Calu3 (cell line): ENCODE measurements at regions of chr10 and their contacts with region 1.

Region 1: GRCh38 chr10:71383972-71384687 is 12.6 kb upstream of the CDH23 start:
- DNase-seq: peak; percentile 85
- H3K4me3 Mint-ChIP-seq: no peak overlapping the region
- H3K27ac Mint-ChIP-seq: no peak overlapping the region
- H3K4me1 Mint-ChIP-seq: peaks cover 2% of the 10 kb centered on the region
- H3K27me3 Mint-ChIP-seq: peaks cover 40% of the 10 kb centered on the region
- CTCF ChIP-seq: peak; percentile 94

Region 2: GRCh38 chr10:71001470-71001869 is 382.7 kb before region 1 on chr10:
- CTCF ChIA-PET with region 1: no interaction called
- intact Hi-C with region 1: no loop called
- DNase-seq: no peak
- H3K4me3 Mint-ChIP-seq: no peak overlapping the region
- H3K27ac Mint-ChIP-seq: no peak overlapping the region
- H3K4me1 Mint-ChIP-seq: peaks cover 8% of the 10 kb centered on the region
- H3K27me3 Mint-ChIP-seq: peaks cover 100% of the 10 kb centered on the region
- CTCF ChIP-seq: no peak

Region 3: DNA sequence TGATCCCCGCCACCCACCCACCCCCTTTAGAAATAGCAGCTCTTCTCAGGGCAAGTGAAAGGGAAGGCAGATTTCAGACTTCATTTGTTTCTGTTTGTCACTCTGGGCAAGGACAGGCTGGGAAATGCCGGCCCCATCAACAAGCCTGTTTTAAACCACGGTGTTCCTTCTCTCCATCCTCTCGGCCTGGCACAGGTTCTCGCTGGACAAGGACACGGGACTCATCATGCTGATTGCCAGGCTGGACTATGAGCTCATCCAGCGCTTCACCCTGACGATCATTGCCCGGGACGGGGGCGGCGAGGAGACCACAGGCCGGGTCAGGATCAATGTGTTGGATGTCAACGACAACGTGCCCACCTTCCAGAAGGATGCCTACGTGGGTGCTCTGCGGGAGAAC is 293.1 kb after region 1 on chr10:
- CTCF ChIA-PET with region 1: interaction called, 14 read pairs
- intact Hi-C with region 1: no loop called
- DNase-seq: no peak
- H3K4me3 Mint-ChIP-seq: no peak overlapping the region
- H3K27ac Mint-ChIP-seq: no peak overlapping the region
- H3K4me1 Mint-ChIP-seq: no peaks in the 10 kb centered on the region
- H3K27me3 Mint-ChIP-seq: peaks cover 59% of the 10 kb centered on the region
- CTCF ChIP-seq: no peak

Region 4: GRCh38 chr10:71708301-71708703 is 324.2 kb after region 1 on chr10:
- CTCF ChIA-PET with region 1: interaction called, 7 read pairs
- intact Hi-C with region 1: loop called (anchors 10 kb)
- DNase-seq: peak; percentile 73
- H3K4me3 Mint-ChIP-seq: no peak overlapping the region
- H3K27ac Mint-ChIP-seq: no peak overlapping the region
- H3K4me1 Mint-ChIP-seq: peaks cover 4% of the 10 kb centered on the region
- H3K27me3 Mint-ChIP-seq: peaks cover 2% of the 10 kb centered on the region
- CTCF ChIP-seq: peak; percentile 93